ENCODE measurements at regions of chr1 and their contacts with region 1.

Region 1: GRCh38 chr1:7646981-7647901 is 123.9 kb upstream of the VAMP3 start:
- DNase-seq: peak; percentile 34
- H3K4me3 Mint-ChIP-seq: no peak overlapping the region
- H3K27ac Mint-ChIP-seq: no peak overlapping the region
- H3K4me1 Mint-ChIP-seq: no peaks in the 10 kb centered on the region
- H3K27me3 Mint-ChIP-seq: no peaks in the 10 kb centered on the region

Region 2: GRCh38 chr1:7454052-7454815 is 193.0 kb before region 1 on chr1:
- intact Hi-C with region 1: loop called (anchors 1 kb)
- DNase-seq: no peak
- H3K4me3 Mint-ChIP-seq: no peak overlapping the region
- H3K27ac Mint-ChIP-seq: no peak overlapping the region
- H3K4me1 Mint-ChIP-seq: no peaks in the 10 kb centered on the region
- H3K27me3 Mint-ChIP-seq: no peaks in the 10 kb centered on the region